CD8-positive, alpha-beta T cell (primary cell): ENCODE measurements at regions of chr16 and their contacts with region 1.

Region 1: DNA sequence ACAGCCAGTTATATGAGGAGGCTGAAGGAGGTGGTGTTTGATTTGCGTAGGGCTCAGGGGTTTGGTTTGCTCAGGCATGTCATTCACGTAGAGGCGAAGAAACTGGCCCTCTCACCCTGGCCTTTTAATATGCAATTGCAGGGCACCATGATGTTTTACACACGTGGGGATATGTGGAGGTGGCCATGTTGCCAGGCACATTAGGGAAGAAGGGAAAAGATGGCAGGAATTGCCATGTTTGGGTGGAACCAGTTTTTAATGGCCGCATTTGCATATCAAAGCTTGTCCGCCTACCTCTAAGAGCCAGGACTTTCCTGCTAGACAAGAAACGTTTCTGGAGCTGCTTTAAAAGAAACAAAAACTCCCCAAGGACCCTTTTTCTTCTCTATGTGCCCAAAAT is 1483.7 kb upstream of the GOT2 start:
- DNase-seq: no peak
- ATAC-seq: no peak
- H3K4me3 ChIP-seq: no peak overlapping the region
- H3K4me3 Mint-ChIP-seq: no peak overlapping the region
- H3K27ac ChIP-seq: no peak overlapping the region
- H3K27ac Mint-ChIP-seq: no peak overlapping the region
- H3K4me1 ChIP-seq: no peaks in the 10 kb centered on the region
- H3K4me1 Mint-ChIP-seq: no peaks in the 10 kb centered on the region
- H3K27me3 ChIP-seq: no peaks in the 10 kb centered on the region
- H3K27me3 Mint-ChIP-seq: no peaks in the 10 kb centered on the region
- CTCF ChIP-seq: no peak

Region 2: GRCh38 chr16:60246086-60246485 is 28.3 kb after region 1 on chr16:
- CTCF ChIA-PET with region 1: no interaction called
- POLR2A ChIA-PET with region 1: no interaction called
- intact Hi-C with region 1: loop called in 1 of 2 experiments (anchors 5 kb)
- DNase-seq: no peak
- ATAC-seq: no peak
- H3K4me3 ChIP-seq: no peak overlapping the region
- H3K4me3 Mint-ChIP-seq: no peak overlapping the region
- H3K27ac ChIP-seq: no peak overlapping the region
- H3K27ac Mint-ChIP-seq: no peak overlapping the region
- H3K4me1 ChIP-seq: no peaks in the 10 kb centered on the region
- H3K4me1 Mint-ChIP-seq: no peaks in the 10 kb centered on the region
- H3K27me3 ChIP-seq: no peaks in the 10 kb centered on the region
- H3K27me3 Mint-ChIP-seq: no peaks in the 10 kb centered on the region
- CTCF ChIP-seq: no peak